ENCODE measurements at regions of chr11 and their contacts with region 1.

Region 1: GRCh38 chr11:1618231-1618630 is 3.7 kb downstream of the KRTAP5-4 start:
- DNase-seq: no peak
- H3K4me3 ChIP-seq: no peak overlapping the region
- H3K4me3 Mint-ChIP-seq: peak overlapping the region in 1 of 8 donors; percentile 1
- H3K27ac ChIP-seq: no peak overlapping the region
- H3K27ac Mint-ChIP-seq: peak overlapping the region in 3 of 7 donors; percentile 4 to 72 (median 37)
- H3K4me1 ChIP-seq: peaks cover 9% of the 10 kb centered on the region
- H3K4me1 Mint-ChIP-seq: peaks cover 5 to 10% (median 6%) of the 10 kb centered on the region in 4 donors
- H3K27me3 ChIP-seq: no peaks in the 10 kb centered on the region
- H3K27me3 Mint-ChIP-seq: peaks cover 5 to 19% of the 10 kb centered on the region in 2 donors

Region 2: GRCh38 chr11:1640076-1640946 is 22.1 kb after region 1 on chr11:
- CTCF ChIA-PET with region 1: interaction called, 10 read pairs
- POLR2A ChIA-PET with region 1: no interaction called
- intact Hi-C with region 1: no loop called
- DNase-seq: peak in 4 of 5 donors; percentile 16 to 36 (median 20)
- H3K4me3 ChIP-seq: no peak overlapping the region
- H3K4me3 Mint-ChIP-seq: no peak overlapping the region
- H3K27ac ChIP-seq: no peak overlapping the region
- H3K27ac Mint-ChIP-seq: no peak overlapping the region
- H3K4me1 ChIP-seq: no peaks in the 10 kb centered on the region
- H3K4me1 Mint-ChIP-seq: peaks cover 0 to 5% (median under 1%) of the 10 kb centered on the region in 4 donors
- H3K27me3 ChIP-seq: peaks cover 5% of the 10 kb centered on the region
- H3K27me3 Mint-ChIP-seq: peaks cover 13 to 20% of the 10 kb centered on the region in 2 donors